AG04450 (cell line): ENCODE measurements at regions of chr6 and their contacts with region 1.

Region 1: DNA sequence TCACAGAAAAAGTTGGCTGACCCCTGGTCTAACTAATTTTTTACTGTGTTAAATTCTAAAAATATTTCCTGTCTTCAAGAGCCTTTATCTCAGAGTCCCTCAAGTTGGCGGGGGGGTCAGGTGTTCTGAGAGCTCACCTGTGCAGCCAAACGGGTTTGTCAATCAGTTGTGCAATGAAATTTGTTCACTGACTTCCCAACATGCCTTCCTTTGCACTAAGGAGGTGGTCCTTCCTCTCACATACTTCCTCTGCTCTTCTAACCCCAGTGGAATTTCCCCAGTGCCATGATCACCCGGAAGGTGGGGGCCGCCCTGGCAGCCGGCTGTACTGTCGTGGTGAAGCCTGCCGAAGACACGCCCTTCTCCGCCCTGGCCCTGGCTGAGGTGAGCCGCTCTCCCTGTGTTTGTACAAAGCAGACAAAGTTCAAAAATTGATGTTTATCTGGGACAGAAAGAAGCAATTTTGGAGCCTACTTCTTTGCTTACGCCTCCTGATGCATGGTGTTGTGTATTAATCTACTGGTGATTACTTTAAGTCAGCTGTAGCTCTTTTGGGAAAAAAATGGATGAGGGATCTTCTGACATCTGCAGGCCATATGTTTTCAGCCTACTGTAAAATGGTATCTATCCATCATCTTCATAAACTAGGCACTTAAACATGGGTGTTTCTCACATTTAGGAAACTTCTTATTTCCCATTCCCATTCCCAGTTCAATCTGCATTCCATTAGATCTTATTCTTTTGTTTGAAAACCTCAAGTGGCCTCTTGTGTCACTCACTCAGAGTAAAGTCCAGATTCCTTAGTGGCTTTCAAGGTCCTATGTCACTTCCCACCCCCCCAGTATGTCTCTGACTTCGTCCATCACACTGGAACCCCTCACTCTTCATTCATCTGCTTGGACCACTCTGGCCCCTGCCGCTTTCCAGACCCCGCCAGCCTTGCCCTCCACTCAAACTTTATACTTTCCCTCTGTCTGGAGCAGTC is 10.1 kb downstream of the ALDH5A1 start:
- DNase-seq: no peak
- H3K4me3 ChIP-seq: no peak overlapping the region
- H3K27ac ChIP-seq: no peak overlapping the region
- H3K27me3 ChIP-seq: no peaks in the 10 kb centered on the region
- CTCF ChIP-seq: no peak

Region 2: GRCh38 chr6:24140591-24140990 is 364.3 kb before region 1 on chr6:
- CTCF ChIA-PET with region 1: no interaction called
- POLR2A ChIA-PET with region 1: no interaction called
- DNase-seq: no peak
- H3K4me3 ChIP-seq: no peak overlapping the region
- H3K27ac ChIP-seq: no peak overlapping the region
- H3K27me3 ChIP-seq: no peaks in the 10 kb centered on the region
- CTCF ChIP-seq: no peak

Region 3: GRCh38 chr6:24492475-24492874 is 12.4 kb before region 1 on chr6:
- CTCF ChIA-PET with region 1: interaction called, 12 read pairs
- POLR2A ChIA-PET with region 1: no interaction called
- DNase-seq: no peak
- H3K4me3 ChIP-seq: no peak overlapping the region
- H3K27ac ChIP-seq: no peak overlapping the region
- H3K27me3 ChIP-seq: peaks cover 8% of the 10 kb centered on the region
- CTCF ChIP-seq: peak; percentile 35; the same call in 1 of the 2 replicates